ENCODE measurements at regions of chr17 and their contacts with region 1.

Region 1: GRCh38 chr17:59106463-59107305 is at the start of gene TRIM37:
- DNase-seq: peak; percentile 100
- H3K4me3 Mint-ChIP-seq: peak within 1 kb of the TSS; percentile 97
- H3K27ac Mint-ChIP-seq: peak within 1 kb of the TSS; percentile 90
- H3K4me1 Mint-ChIP-seq: peaks cover 66% of the 10 kb centered on the region
- H3K27me3 Mint-ChIP-seq: peaks cover 1% of the 10 kb centered on the region
- total RNA-seq, gene TRIM37: 27.5 and 27.7 TPM in 2 replicates

Region 2: GRCh38 chr17:58734040-58734872 is 372.4 kb before region 1 on chr17:
- intact Hi-C with region 1: no loop called
- DNase-seq: no peak
- H3K4me3 Mint-ChIP-seq: no peak overlapping the region
- H3K27ac Mint-ChIP-seq: no peak overlapping the region
- H3K4me1 Mint-ChIP-seq: no peaks in the 10 kb centered on the region
- H3K27me3 Mint-ChIP-seq: no peaks in the 10 kb centered on the region

Region 3: DNA sequence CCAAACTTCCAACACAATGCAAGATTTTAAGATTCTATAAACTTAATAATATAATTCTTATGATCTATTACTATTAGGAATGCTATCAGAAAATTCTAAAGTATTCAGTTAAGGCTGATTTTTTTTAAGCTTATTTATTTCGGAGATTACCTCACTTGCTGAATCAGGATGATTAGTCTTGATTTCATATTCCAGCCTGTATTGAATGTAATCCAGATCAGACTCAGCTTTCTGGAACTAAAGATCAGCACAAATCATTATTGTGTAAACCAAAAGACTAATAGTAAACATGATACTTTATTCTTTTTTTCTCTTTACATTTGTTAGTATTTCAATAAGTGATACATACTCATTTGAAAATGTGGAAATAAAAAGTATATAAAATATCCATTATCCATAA is 24.4 kb after region 1 on chr17:
- intact Hi-C with region 1: no loop called
- DNase-seq: no peak
- H3K4me3 Mint-ChIP-seq: no peak overlapping the region
- H3K27ac Mint-ChIP-seq: no peak overlapping the region
- H3K4me1 Mint-ChIP-seq: peaks cover 5% of the 10 kb centered on the region
- H3K27me3 Mint-ChIP-seq: no peaks in the 10 kb centered on the region

Region 4: GRCh38 chr17:59220376-59221158 is 113.9 kb after region 1 on chr17 and contains the start of gene GDPD1:
- intact Hi-C with region 1: loop called (anchors 1 kb)
- DNase-seq: peak; percentile 97
- H3K4me3 Mint-ChIP-seq: peak within 1 kb of the TSS; percentile 95
- H3K27ac Mint-ChIP-seq: peak within 1 kb of the TSS; percentile 93
- H3K4me1 Mint-ChIP-seq: peaks cover 14% of the 10 kb centered on the region
- H3K27me3 Mint-ChIP-seq: peaks cover 6% of the 10 kb centered on the region
- total RNA-seq, gene GDPD1: 2.7 and 3.2 TPM in 2 replicates

Region 5: GRCh38 chr17:59950049-59950448 is 843.4 kb after region 1 on chr17:
- intact Hi-C with region 1: no loop called
- DNase-seq: no peak
- H3K4me3 Mint-ChIP-seq: no peak overlapping the region
- H3K27ac Mint-ChIP-seq: no peak overlapping the region
- H3K4me1 Mint-ChIP-seq: peaks cover 16% of the 10 kb centered on the region
- H3K27me3 Mint-ChIP-seq: no peaks in the 10 kb centered on the region